ENCODE measurements at regions of chr5 and their contacts with region 1.

Region 1: GRCh38 chr5:112921833-112922817 is at the start of gene REEP5:
- DNase-seq: no peak
- H3K4me3 ChIP-seq: peak within 1 kb of the TSS; percentile 71
- H3K27me3 ChIP-seq: peaks cover 3% of the 10 kb centered on the region; the same call in 1 of the 2 replicates
- CTCF ChIP-seq: peak; percentile 69
- polyA plus RNA-seq, gene REEP5: 278 and 334 TPM in 2 replicates

Region 2: DNA sequence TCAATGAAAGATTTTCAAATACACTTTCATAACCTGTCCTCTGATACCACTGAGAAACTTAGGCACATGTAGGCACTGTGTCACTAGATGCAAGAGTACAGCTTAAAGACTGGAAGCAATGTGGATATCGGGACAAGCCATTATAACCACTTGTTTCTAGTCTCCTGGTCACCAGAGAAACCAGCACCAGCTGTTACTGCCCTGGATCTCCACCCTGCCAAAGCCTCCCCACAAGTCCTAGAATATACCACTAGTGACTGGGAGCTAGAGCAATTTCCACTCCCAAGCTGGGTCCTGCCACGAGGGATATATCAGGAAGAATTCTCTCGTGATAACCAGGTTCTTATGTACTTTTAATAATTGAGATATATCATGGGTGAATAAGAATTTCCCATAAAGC is 19.6 kb before region 1 on chr5:
- CTCF ChIA-PET with region 1: interaction called, 13 read pairs
- POLR2A ChIA-PET with region 1: no interaction called
- DNase-seq: no peak
- H3K4me3 ChIP-seq: no peak overlapping the region
- H3K27me3 ChIP-seq: no peaks in the 10 kb centered on the region
- CTCF ChIP-seq: no peak

Region 3: GRCh38 chr5:113005454-113005853 is 83.3 kb after region 1 on chr5:
- CTCF ChIA-PET with region 1: no interaction called
- POLR2A ChIA-PET with region 1: no interaction called
- DNase-seq: no peak
- H3K4me3 ChIP-seq: no peak overlapping the region
- H3K27me3 ChIP-seq: no peaks in the 10 kb centered on the region
- CTCF ChIP-seq: no peak

Measured in BJ (cell line).